Mammary epithelial cell (primary cell): ENCODE measurements at regions of chr1 and their contacts with region 1.

Region 1: GRCh38 chr1:5779598-5780323 is 212.5 kb downstream of the NPHP4 start:
- DNase-seq: no peak
- H3K4me3 ChIP-seq: no peak overlapping the region
- H3K27ac ChIP-seq: no peak overlapping the region
- H3K4me1 ChIP-seq: no peaks in the 10 kb centered on the region
- H3K27me3 ChIP-seq: no peaks in the 10 kb centered on the region
- CTCF ChIP-seq: no peak

Region 2: DNA sequence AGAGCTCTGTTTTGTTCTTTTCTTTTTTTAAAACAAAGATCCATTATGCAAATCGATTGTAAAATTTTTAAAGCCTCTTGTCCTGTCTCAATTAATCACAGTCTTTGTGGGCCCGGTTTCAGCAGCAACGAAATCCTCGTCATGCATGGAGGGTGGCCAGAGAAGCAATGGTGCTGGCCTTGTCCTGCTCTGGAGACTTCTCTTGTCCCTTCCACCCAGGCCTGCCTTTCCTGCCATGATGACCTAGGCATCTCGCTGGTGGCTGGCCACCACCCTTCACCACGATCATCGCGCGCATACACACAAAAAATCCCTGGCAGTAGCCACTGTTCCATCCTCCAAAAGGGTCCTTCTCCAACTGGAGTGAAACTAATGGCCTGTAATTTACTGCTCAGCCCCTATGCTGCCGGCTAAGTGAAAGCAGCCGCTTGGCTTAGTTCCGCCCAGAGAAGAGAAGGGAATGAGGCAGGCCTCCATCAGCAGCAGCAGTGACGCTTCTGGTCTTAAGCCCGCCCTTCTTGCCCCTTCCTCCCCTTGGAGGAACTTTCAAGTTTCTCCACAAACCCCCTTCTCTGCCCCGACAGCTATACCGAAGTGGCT is 97.0 kb before region 1 on chr1:
- CTCF ChIA-PET with region 1: no interaction called
- dilution Hi-C with region 1: loop called (anchors 5 kb)
- in situ Hi-C with region 1: no loop called
- intact Hi-C with region 1: no loop called
- DNase-seq: no peak
- H3K4me3 ChIP-seq: no peak overlapping the region
- H3K27ac ChIP-seq: no peak overlapping the region
- H3K4me1 ChIP-seq: no peaks in the 10 kb centered on the region
- H3K27me3 ChIP-seq: no peaks in the 10 kb centered on the region
- CTCF ChIP-seq: no peak

Region 3: DNA sequence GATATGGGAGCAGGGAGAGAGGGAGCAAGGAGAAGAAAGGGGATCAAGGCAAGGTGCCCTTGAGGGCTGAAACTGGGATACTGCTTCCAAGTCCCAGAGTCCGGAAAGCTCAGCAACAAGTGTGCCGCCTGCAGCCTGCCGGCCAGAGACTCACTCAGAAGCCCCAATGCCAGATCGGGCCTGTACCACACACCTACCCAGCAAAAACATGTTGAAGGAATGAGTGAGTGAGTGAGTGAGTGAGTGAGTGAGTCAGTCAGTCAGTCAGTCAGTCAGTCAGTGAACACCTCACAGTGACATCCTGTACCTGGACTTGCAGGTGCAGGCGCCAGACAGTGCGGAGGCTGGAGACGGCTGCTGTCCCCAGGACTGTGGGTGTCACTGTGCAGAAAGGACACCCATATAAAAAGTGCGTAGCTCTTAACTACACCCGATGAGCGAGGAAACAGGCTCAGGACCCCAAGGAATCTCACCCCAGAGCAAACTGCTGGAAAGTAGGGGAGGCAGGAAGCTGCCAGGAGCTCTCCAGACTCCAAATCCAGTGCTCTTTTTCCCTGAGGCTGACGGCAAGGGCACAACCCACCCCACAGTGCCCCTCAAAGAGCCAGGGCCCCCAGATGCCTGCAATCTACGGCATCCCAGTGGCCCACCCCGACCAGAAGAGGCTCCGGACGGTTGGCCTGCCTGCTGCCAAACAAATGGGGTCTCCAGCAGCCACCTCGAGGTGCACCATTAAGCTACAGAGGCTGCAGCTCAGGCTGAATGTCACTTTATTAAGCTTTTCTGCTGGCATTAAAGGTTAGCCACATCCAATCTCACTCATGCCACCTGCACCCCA is 49.3 kb before region 1 on chr1:
- CTCF ChIA-PET with region 1: no interaction called
- dilution Hi-C with region 1: loop called (anchors 5 kb)
- in situ Hi-C with region 1: no loop called
- intact Hi-C with region 1: no loop called
- DNase-seq: no peak
- H3K4me3 ChIP-seq: no peak overlapping the region
- H3K27ac ChIP-seq: no peak overlapping the region
- H3K4me1 ChIP-seq: no peaks in the 10 kb centered on the region
- H3K27me3 ChIP-seq: no peaks in the 10 kb centered on the region
- CTCF ChIP-seq: no peak